ENCODE measurements at regions of chr16 and their contacts with region 1.

Region 1: DNA sequence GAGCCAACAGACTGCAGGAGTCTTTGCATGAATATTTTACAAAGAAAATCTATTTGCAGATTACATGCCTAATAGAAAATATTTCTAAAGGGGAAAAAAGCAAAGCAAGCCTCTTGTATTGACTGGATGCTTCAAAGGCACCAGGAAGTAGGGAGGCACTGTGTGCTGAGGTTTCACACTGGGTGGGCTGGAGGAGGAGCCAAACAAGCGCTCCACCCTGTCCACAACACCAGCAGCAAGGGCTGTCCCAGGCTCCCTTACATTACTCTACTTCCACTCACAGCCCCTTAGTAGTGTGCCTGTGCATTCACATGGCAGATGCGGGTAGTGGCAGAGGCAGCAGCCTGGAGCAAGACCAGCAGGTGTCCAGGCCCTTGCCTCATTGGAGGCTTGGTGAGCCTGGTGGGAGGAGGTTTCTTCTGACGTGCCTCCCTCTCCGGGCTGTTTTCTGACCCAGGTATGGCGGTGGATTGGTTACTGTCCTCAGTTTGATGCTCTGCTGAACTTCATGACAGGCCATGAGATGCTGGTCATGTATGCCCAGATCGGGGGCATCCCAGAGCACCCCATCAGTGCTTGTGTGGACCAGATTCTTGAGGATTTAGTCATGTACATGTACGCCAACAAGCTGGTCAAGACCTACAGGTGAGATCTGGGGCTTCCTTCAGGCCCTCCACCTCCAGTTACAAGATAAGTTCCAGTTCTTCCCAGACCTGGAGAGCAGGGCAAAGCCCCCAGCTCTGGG is 7.0 kb upstream of the CCNF start:
- DNase-seq: peak; percentile 61
- ATAC-seq: peak; percentile 78
- H3K4me3 Mint-ChIP-seq: no peak overlapping the region
- H3K27ac Mint-ChIP-seq: no peak overlapping the region
- H3K4me1 Mint-ChIP-seq: peaks cover 22% of the 10 kb centered on the region
- H3K27me3 Mint-ChIP-seq: peaks cover 4% of the 10 kb centered on the region

Region 2: DNA sequence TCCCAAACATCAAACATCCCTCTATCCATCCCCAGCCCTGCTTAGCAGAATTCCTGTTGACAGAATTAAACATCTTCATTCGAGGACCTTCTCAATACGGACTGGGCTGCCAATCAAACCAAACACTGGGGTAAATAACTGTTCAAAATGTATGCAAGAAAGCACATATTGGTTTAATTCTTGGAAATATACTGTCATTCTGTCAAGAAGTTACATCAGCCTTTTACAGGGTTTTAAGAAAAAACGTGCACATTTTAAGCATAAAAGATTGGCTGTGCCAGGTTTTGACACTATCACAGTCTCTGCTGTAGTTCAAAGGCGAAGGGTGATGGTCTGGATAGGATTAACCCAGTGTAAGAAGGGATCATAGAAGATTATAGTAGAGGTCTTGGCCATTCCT is 18.2 kb before region 1 on chr16:
- CTCF ChIA-PET with region 1: interaction called, 15 read pairs
- POLR2A ChIA-PET with region 1: no interaction called
- DNase-seq: no peak
- ATAC-seq: no peak
- H3K4me3 Mint-ChIP-seq: no peak overlapping the region
- H3K27ac Mint-ChIP-seq: no peak overlapping the region
- H3K4me1 Mint-ChIP-seq: peaks cover 5% of the 10 kb centered on the region
- H3K27me3 Mint-ChIP-seq: peaks cover 8% of the 10 kb centered on the region